A673 (cell line): ENCODE measurements at regions of chr21 and their contacts with region 1.

Region 1: DNA sequence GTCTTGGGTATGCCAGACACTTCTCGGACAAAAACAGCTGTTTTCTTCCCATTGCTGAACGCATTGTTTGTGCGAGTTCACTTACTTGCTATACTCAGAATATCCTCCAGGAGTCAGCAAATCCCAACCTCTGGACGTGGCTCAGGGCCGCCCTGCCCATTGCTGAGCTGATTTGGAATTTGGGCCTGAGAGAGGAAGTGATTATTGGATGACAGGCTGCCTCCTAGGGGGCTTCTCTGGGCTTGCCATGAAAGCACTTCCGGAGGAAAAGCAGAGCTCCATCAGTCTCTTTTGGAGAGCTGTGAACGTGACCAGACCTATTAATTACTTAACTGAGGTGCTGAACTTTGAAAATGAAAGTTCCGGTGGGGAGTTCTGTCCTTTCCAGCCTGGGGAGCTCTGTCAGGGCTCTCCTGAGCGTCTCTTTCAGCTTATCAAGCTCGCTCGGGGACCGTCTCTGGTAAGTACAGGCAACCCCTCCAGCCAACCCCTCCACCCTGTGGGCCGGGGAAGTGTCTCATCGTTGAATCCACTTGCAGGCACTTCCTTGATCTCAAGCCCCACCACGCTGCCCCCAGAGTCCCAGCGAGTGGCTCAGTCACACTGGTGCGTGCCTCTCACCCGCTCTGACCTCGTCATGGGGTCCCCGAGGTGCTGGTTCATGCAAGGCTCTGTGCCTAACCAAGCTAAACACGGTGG is 76.9 kb downstream of the CLIC6 start:
- DNase-seq: peak; percentile 93
- H3K4me3 ChIP-seq: peak overlapping the region; percentile 22
- H3K27ac ChIP-seq: no peak overlapping the region
- H3K4me1 ChIP-seq: no peaks in the 10 kb centered on the region
- H3K27me3 ChIP-seq: no peaks in the 10 kb centered on the region
- CTCF ChIP-seq: peak; percentile 92

Region 2: DNA sequence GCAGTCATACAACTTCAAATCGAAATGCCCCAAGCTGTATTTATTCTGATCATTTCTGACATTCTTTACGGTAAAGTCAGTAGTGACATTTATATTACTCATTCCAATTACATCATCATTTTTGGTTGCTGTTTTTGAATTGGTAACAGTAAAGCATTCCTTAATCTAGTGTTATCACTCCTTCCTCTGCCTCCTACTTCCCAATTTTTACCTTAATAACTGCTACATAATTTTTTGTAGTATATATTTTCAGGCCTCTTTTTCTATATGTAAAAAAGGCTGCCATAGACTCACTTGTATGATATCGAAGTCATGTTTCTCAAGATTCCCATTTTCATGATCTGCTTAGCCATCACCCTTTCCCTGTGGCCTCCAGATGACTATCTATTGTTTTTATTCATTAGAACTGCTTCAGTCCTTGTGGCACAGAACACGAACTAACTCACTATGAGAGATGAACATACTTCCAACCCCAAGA is 136.2 kb after region 1 on chr21:
- CTCF ChIA-PET with region 1: no interaction called
- POLR2A ChIA-PET with region 1: no interaction called
- intact Hi-C with region 1: loop called (anchors 5 kb)
- DNase-seq: no peak
- H3K4me3 ChIP-seq: no peak overlapping the region
- H3K27ac ChIP-seq: no peak overlapping the region
- H3K4me1 ChIP-seq: no peaks in the 10 kb centered on the region
- H3K27me3 ChIP-seq: peaks cover 66% of the 10 kb centered on the region
- CTCF ChIP-seq: no peak

Region 3: GRCh38 chr21:34888569-34889319 is 143.0 kb after region 1 on chr21:
- CTCF ChIA-PET with region 1: interaction called, 11 read pairs
- POLR2A ChIA-PET with region 1: no interaction called
- intact Hi-C with region 1: loop called (anchors 5 kb)
- DNase-seq: peak; percentile 88
- H3K4me3 ChIP-seq: peak overlapping the region; percentile 40
- H3K27ac ChIP-seq: no peak overlapping the region
- H3K4me1 ChIP-seq: peaks cover 19% of the 10 kb centered on the region
- H3K27me3 ChIP-seq: peaks cover 96% of the 10 kb centered on the region
- CTCF ChIP-seq: no peak

Region 4: GRCh38 chr21:35840197-35840799 is 1094.6 kb after region 1 on chr21:
- CTCF ChIA-PET with region 1: interaction called, 27 read pairs
- POLR2A ChIA-PET with region 1: interaction called, 3 read pairs
- intact Hi-C with region 1: loop called (anchors 2 kb)
- DNase-seq: peak; percentile 72
- H3K4me3 ChIP-seq: no peak overlapping the region
- H3K27ac ChIP-seq: no peak overlapping the region
- H3K4me1 ChIP-seq: no peaks in the 10 kb centered on the region
- H3K27me3 ChIP-seq: peaks cover 8% of the 10 kb centered on the region
- CTCF ChIP-seq: peak; percentile 90

Region 5: DNA sequence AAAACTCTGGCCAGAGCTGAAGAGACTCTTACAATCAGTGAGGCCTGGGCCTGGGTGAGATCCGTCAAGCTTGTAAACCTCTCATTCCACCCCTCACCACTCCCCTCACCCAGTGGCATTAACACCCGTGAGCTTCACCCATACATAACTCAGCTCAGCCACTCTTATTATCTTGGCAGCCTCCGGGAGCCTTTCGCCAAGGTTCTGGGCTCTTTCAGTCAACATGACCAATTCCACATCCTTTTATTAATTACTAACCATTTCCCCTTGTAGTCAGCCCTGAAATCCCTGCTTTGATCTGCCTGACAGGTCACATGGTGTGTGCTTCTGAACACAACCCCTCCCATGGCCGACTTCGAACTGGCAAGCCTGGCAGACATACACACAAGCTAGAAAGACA is 1179.8 kb after region 1 on chr21:
- CTCF ChIA-PET with region 1: no interaction called
- POLR2A ChIA-PET with region 1: no interaction called
- intact Hi-C with region 1: no loop called
- DNase-seq: peak; percentile 37
- H3K4me3 ChIP-seq: no peak overlapping the region
- H3K27ac ChIP-seq: no peak overlapping the region
- H3K4me1 ChIP-seq: peaks cover 3% of the 10 kb centered on the region
- H3K27me3 ChIP-seq: peaks cover 3% of the 10 kb centered on the region
- CTCF ChIP-seq: no peak

Region 6: GRCh38 chr21:35940074-35940927 is 1194.6 kb after region 1 on chr21:
- CTCF ChIA-PET with region 1: interaction called, 5 read pairs
- POLR2A ChIA-PET with region 1: no interaction called
- intact Hi-C with region 1: loop called (anchors 2 kb)
- DNase-seq: peak; percentile 81
- H3K4me3 ChIP-seq: no peak overlapping the region
- H3K27ac ChIP-seq: no peak overlapping the region
- H3K4me1 ChIP-seq: no peaks in the 10 kb centered on the region
- H3K27me3 ChIP-seq: no peaks in the 10 kb centered on the region
- CTCF ChIP-seq: peak; percentile 77

Region 7: GRCh38 chr21:36028127-36029069 is 1282.7 kb after region 1 on chr21:
- CTCF ChIA-PET with region 1: no interaction called
- POLR2A ChIA-PET with region 1: no interaction called
- intact Hi-C with region 1: loop called (anchors 2 kb)
- DNase-seq: peak; percentile 77
- H3K4me3 ChIP-seq: no peak overlapping the region
- H3K27ac ChIP-seq: no peak overlapping the region
- H3K4me1 ChIP-seq: no peaks in the 10 kb centered on the region
- H3K27me3 ChIP-seq: no peaks in the 10 kb centered on the region
- CTCF ChIP-seq: peak; percentile 95